ENCODE measurements at regions of chr1 and their contacts with region 1.

Region 1: DNA sequence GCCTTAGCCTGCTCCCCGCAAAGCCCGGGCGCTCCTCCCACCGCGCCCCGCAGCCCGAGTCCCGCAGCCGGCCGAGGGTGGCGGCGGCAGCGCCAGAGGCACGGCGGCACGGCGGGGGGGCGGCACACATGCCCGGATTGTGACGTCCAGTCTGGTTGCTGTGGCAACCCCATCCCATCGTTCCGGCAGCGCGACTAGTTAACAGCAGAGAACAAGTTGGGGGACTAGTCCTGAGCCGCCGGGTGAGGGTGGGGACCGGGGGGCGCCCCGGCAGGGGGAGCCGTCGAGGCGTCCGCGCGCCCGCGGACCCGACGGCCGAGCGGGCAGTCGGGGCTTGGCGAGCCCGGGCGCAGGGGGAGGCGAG is at the start of gene CHD5:
- DNase-seq: no peak
- ATAC-seq: peak in 1 of 4 donors; percentile 7
- H3K4me3 ChIP-seq: peak within 1 kb of the TSS in 10 of 12 donors; percentile 16 to 44 (median 34)
- H3K27ac ChIP-seq: no peak within 1 kb of the TSS
- H3K4me1 ChIP-seq: peaks cover 5 to 30% (median 14%) of the 10 kb centered on the region in 12 donors
- H3K27me3 ChIP-seq: peaks cover 17 to 52% (median 34%) of the 10 kb centered on the region in 9 donors
- CTCF ChIP-seq: peak in 5 of 12 donors; percentile 6 to 30 (median 13)
- POLR2A ChIP-seq: no peak
- total RNA-seq, gene CHD5: 0.07 to 1.3 (median 0.32) TPM in 7 of 9 donors, not detected in the others

Region 2: GRCh38 chr1:6041432-6042062 is 138.6 kb before region 1 on chr1:
- intact Hi-C with region 1: loop called in 2 of 10 experiments (anchors 5 to 10 kb)
- DNase-seq: no peak
- ATAC-seq: peak in 2 of 4 donors; percentile 44 to 50
- H3K4me3 ChIP-seq: no peak overlapping the region
- H3K27ac ChIP-seq: no peak overlapping the region
- H3K4me1 ChIP-seq: peaks cover 0 to 6% (median 0%) of the 10 kb centered on the region in 12 donors
- H3K27me3 ChIP-seq: no peaks in the 10 kb centered on the region
- CTCF ChIP-seq: peak in 10 of 12 donors; percentile 27 to 54 (median 49)
- POLR2A ChIP-seq: no peak

Region 3: GRCh38 chr1:6059866-6060265 is 120.3 kb before region 1 on chr1:
- intact Hi-C with region 1: loop called in 2 of 10 experiments (anchors 5 to 10 kb)
- DNase-seq: no peak
- ATAC-seq: no peak
- H3K4me3 ChIP-seq: no peak overlapping the region
- H3K27ac ChIP-seq: no peak overlapping the region
- H3K4me1 ChIP-seq: peaks cover 0 to 44% (median 20%) of the 10 kb centered on the region in 12 donors
- H3K27me3 ChIP-seq: no peaks in the 10 kb centered on the region
- CTCF ChIP-seq: no peak
- POLR2A ChIP-seq: no peak

Region 4: DNA sequence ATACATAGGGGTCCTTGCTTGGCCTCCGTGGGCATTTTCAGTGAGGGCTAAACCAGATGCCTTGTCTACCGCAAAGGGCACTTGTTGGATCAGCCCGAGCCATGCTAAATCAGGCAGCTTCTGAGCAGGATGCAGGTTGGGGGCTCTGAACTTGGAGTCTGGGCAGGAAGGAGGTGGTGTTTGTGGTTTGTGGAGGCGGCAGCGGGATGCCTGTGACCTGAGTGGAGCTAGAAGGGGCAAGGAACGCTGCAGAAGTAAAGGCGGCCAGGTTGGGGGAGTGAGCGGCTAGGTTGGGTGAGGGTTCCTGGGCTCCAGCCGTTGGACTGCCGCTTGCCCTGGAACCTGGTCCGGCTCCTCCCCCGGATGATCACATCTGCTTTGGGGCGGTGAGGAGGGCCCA is 788.9 kb after region 1 on chr1:
- intact Hi-C with region 1: no loop called
- DNase-seq: no peak
- ATAC-seq: no peak
- H3K4me3 ChIP-seq: no peak overlapping the region
- H3K27ac ChIP-seq: no peak overlapping the region
- H3K4me1 ChIP-seq: peaks cover 0 to 6% (median 0%) of the 10 kb centered on the region in 12 donors
- H3K27me3 ChIP-seq: peaks cover 0 to 26% (median 0%) of the 10 kb centered on the region in 9 donors
- CTCF ChIP-seq: no peak
- POLR2A ChIP-seq: no peak

Measured in heart left ventricle (tissue), 16 donors.